ENCODE measurements at regions of chr9 and their contacts with region 1.

Region 1: DNA sequence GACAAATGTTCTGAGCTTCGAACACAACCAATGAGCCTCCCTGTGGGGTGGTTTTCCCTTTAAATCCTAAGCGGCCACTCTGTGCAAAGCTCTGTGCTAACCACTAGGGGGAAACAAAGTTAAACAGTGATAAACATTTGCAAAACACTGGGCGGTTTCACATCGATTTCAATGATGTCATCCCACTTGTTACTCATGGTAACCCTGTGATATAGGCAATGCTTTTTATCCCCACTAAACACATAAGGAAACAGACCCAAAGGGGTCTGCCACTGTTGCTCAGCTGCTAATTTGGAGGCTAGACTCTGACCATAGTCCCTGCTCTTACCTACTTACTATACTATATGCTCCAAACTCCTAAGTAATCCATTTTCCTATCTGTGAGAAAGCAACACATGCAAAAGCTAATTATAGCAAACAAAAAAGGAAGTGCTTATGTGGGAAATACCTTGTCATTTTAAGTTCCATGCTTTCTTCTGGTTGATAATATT is 57.3 kb downstream of the PTPN3 start:
- DNase-seq: peak; percentile 82 to 90
- ATAC-seq: peak; percentile 96
- H3K4me3 ChIP-seq: no peak overlapping the region
- H3K27ac ChIP-seq: peak overlapping the region; percentile 34 to 57; a peak in 5 of 6 replicates
- H3K4me1 ChIP-seq: peaks cover 20% of the 10 kb centered on the region
- CTCF ChIP-seq: peak; percentile 85
- EP300 ChIP-seq: no peak
- POLR2A ChIP-seq: no peak
- RAD21 ChIP-seq: peak; percentile 72 to 80

Region 2: GRCh38 chr9:109453210-109453842 is 12.5 kb after region 1 on chr9:
- CTCF ChIA-PET with region 1: interaction called, 35 read pairs
- POLR2A ChIA-PET with region 1: interaction called, 5 read pairs
- DNase-seq: peak; percentile 42 to 71
- ATAC-seq: peak; percentile 84 to 88
- H3K4me3 ChIP-seq: no peak overlapping the region
- H3K27ac ChIP-seq: peak overlapping the region; percentile 81 to 87
- H3K4me1 ChIP-seq: peaks cover 56% of the 10 kb centered on the region
- CTCF ChIP-seq: no peak
- EP300 ChIP-seq: peak in 1 of 2 experiments; percentile 19; a peak in 1 of 5 replicates
- POLR2A ChIP-seq: no peak
- RAD21 ChIP-seq: no peak

Region 3: DNA sequence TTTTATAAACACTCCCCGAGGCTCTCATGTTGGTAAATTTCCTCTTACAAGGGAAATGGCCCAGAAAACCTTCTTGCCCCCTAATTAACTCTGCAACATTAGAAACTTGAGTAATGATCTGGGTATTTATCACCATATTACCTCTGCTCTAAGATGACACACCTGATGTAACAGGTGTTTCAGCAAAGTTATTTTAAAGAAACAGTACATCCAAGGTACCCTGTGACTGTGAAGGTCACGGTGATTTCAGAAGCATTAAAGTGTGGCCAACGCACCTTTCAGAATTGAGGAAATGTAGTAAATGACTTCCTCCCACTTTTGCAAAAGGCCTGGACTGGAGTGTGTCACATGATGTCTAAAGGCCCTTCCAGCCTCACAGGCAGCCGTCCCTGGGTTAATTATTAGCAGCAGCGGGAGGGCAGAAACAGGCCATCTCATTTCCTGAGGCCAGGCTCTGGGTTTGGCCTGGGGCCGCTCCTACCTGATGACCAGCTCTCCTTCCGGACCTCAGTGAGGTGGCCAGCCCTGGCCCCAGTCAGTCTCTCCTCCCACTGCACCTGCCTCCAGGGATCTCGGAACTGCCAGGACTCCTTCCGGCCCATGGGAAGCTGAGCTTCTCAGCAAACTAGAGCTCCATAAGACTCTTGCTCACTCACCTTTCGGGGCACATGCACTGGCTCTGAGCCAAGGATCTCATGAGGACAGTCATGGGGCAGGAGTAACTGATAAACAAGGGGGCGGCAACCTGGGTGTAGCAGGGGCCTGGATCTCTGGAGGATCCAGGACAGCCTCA is 36.6 kb after region 1 on chr9:
- CTCF ChIA-PET with region 1: interaction called, 45 read pairs
- POLR2A ChIA-PET with region 1: no interaction called
- DNase-seq: peak; percentile 87 to 91
- ATAC-seq: peak; percentile 92
- H3K4me3 ChIP-seq: no peak overlapping the region
- H3K27ac ChIP-seq: peak overlapping the region; percentile 83 to 89
- H3K4me1 ChIP-seq: peaks cover 67% of the 10 kb centered on the region
- CTCF ChIP-seq: no peak
- EP300 ChIP-seq: no peak
- POLR2A ChIP-seq: 0 out of 2 replicates have a peak, but pooled peaks have one; percentile 5
- RAD21 ChIP-seq: no peak

Region 4: GRCh38 chr9:109499631-109500410 is 59.0 kb after region 1 on chr9:
- CTCF ChIA-PET with region 1: interaction called, 16 read pairs
- POLR2A ChIA-PET with region 1: no interaction called
- DNase-seq: peak; percentile 69 to 74
- ATAC-seq: peak; percentile 82 to 95
- H3K4me3 ChIP-seq: peak overlapping the region; percentile 50
- H3K27ac ChIP-seq: peak overlapping the region; percentile 61 to 97
- H3K4me1 ChIP-seq: peaks cover 24% of the 10 kb centered on the region
- CTCF ChIP-seq: no peak
- EP300 ChIP-seq: no peak
- POLR2A ChIP-seq: peak; percentile 41; the same call in 1 of the 2 replicates
- RAD21 ChIP-seq: no peak

Region 5: GRCh38 chr9:109551651-109552050 is 110.8 kb after region 1 on chr9:
- CTCF ChIA-PET with region 1: no interaction called
- POLR2A ChIA-PET with region 1: no interaction called
- DNase-seq: no peak
- ATAC-seq: no peak
- H3K4me3 ChIP-seq: no peak overlapping the region
- H3K27ac ChIP-seq: no peak overlapping the region
- H3K4me1 ChIP-seq: no peaks in the 10 kb centered on the region
- CTCF ChIP-seq: no peak
- EP300 ChIP-seq: no peak
- POLR2A ChIP-seq: no peak
- RAD21 ChIP-seq: no peak